Esophagus muscularis mucosa (tissue), 4 donors: ENCODE measurements at regions of chr9 and their contacts with region 1.

Region 1: GRCh38 chr9:124257844-124258606 is at the start of gene NEK6:
- DNase-seq: no peak
- H3K4me3 ChIP-seq: peak within 1 kb of the TSS; percentile 73 to 84 (median 80)
- H3K27ac ChIP-seq: peak within 1 kb of the TSS; percentile 80 to 89 (median 88)
- H3K4me1 ChIP-seq: peaks cover 31 to 55% (median 52%) of the 10 kb centered on the region in 4 donors
- H3K27me3 ChIP-seq: no peaks in the 10 kb centered on the region
- CTCF ChIP-seq: no peak
- EP300 ChIP-seq: no peak
- POLR2A ChIP-seq: no peak
- total RNA-seq, gene NEK6: 14.1 to 21.9 (median 15.1) TPM

Region 2: DNA sequence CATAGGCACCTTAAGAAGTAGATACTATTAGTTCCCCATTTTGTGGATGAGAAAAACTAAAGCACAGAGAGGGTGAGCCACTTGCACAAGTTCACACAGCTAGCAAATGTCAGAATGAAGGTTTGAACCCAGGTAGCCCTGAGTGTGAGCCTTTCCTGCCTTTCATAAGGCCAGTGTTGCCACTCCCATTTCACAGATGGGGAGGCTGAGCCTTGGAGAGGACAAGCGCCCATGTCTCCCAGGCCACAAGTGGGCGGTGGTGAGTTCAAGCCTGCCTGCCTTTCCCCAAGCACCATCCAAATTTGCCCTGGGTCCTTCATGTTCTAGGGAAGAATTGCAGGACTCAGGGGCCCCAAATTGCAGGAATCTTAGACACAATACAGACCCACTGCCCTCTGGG is 195.9 kb before region 1 on chr9:
- intact Hi-C with region 1: no loop called
- DNase-seq: no peak
- H3K4me3 ChIP-seq: no peak overlapping the region
- H3K27ac ChIP-seq: no peak overlapping the region
- H3K4me1 ChIP-seq: no peaks in the 10 kb centered on the region
- H3K27me3 ChIP-seq: peaks cover 0 to 27% (median 0%) of the 10 kb centered on the region in 4 donors
- CTCF ChIP-seq: no peak
- EP300 ChIP-seq: no peak
- POLR2A ChIP-seq: no peak

Region 3: DNA sequence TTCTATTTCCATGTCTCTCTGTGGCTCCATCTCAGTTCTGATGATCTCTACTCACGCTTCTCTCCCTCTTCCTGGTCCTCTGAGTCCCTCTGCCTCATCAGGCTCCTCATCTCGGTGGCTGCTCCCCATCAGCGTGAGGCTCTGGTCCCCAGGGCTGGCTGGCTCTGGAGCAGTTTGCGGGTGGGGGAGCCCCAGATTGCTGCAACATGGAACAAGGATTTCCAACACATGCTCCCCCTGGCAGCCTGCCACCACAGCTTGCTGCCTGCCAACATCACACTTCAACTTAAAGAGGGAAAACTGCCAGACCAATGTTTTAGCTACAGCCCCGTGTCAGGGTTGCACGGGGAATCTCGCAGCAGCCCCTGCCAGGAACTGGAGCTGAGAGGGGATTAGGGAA is 77.5 kb before region 1 on chr9:
- intact Hi-C with region 1: no loop called
- DNase-seq: no peak
- H3K4me3 ChIP-seq: no peak overlapping the region
- H3K27ac ChIP-seq: no peak overlapping the region
- H3K4me1 ChIP-seq: peaks cover 0 to 6% (median 2%) of the 10 kb centered on the region in 4 donors
- H3K27me3 ChIP-seq: peaks cover 0 to 44% (median 0%) of the 10 kb centered on the region in 4 donors
- CTCF ChIP-seq: no peak
- EP300 ChIP-seq: no peak
- POLR2A ChIP-seq: no peak

Region 4: DNA sequence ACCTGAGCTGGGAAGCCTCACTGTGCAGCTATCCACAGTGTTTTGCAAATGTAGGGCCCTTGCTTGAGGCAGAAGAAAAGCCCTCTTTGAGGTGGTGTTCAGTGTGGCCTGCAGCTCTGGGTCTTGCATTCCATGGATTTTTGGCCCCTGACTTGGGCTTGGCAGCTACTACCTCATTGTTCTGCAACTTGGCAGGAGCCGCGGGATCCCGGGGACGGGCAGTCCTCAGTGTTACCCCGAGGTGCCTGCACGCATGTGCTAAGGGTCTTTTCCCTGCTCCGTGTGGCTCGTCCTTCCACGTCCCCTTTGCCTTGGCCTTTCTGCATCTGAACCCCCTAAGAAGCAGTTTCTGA is 39.5 kb after region 1 on chr9:
- intact Hi-C with region 1: loop called (anchors 5 kb)
- DNase-seq: no peak
- H3K4me3 ChIP-seq: no peak overlapping the region
- H3K27ac ChIP-seq: peak overlapping the region; percentile 71 to 75 (median 74)
- H3K4me1 ChIP-seq: peaks cover 54 to 84% (median 81%) of the 10 kb centered on the region in 4 donors
- H3K27me3 ChIP-seq: no peaks in the 10 kb centered on the region
- CTCF ChIP-seq: no peak
- EP300 ChIP-seq: peak; percentile 36
- POLR2A ChIP-seq: no peak

Region 5: GRCh38 chr9:124320062-124320973 is 62.3 kb after region 1 on chr9:
- intact Hi-C with region 1: loop called (anchors 5 kb)
- DNase-seq: no peak
- H3K4me3 ChIP-seq: no peak overlapping the region
- H3K27ac ChIP-seq: no peak overlapping the region
- H3K4me1 ChIP-seq: peaks cover 8 to 11% (median 10%) of the 10 kb centered on the region in 4 donors
- H3K27me3 ChIP-seq: no peaks in the 10 kb centered on the region
- CTCF ChIP-seq: peak; percentile 79 to 92 (median 86)
- EP300 ChIP-seq: no peak
- POLR2A ChIP-seq: no peak